ENCODE measurements at regions of chr14 and their contacts with region 1.

Region 1: GRCh38 chr14:54669721-54670561 is 103.0 kb downstream of the SAMD4A start:
- DNase-seq: no peak
- H3K4me3 Mint-ChIP-seq: no peak overlapping the region
- H3K27ac Mint-ChIP-seq: no peak overlapping the region
- H3K4me1 Mint-ChIP-seq: peaks cover 51% of the 10 kb centered on the region
- H3K27me3 Mint-ChIP-seq: peaks cover 21% of the 10 kb centered on the region

Region 2: DNA sequence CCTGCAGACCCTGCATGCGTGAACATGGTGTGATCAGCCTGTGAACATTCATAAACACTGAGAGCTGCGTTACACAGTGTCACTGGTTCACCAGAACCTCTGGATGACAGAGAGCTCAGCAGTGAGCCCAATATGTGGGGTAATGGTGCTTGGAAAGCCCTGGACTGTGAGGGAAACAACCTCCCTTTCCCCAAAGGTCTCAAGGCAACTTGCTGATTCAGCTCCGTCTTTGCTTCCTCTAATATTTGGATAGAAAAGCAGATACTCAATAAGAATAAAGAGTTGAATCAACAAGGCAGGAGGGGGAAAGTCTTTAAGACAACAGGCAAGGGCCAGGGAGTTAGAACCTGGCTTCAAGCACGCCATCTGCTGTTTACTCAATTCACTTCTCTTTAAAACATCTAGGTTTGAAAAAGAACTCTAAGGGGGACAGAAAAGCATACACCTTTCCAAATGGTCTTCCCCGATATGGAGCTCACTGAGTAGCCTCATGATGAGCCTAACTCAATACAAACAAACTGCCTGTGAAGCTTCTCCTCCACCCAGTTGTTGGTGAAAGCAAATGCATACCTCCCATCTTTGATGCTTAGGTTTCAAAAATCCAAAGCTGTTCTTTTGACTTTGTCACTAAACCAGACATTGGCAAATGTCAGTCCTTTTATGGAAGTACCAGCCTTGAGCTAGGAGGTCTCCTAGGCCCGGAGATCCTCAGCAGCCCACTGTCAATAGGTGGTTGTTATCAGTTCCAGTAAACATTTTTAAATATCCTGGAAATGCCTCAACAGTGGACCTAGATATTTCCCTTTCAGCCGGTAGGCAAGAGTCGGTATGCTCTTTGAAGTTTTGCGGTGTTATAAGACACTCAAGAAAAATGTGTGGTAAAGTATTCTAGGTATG is 26.9 kb before region 1 on chr14:
- intact Hi-C with region 1: loop called (anchors 2 kb)
- DNase-seq: no peak
- H3K4me3 Mint-ChIP-seq: no peak overlapping the region
- H3K27ac Mint-ChIP-seq: no peak overlapping the region
- H3K4me1 Mint-ChIP-seq: peaks cover 13% of the 10 kb centered on the region
- H3K27me3 Mint-ChIP-seq: peaks cover 19% of the 10 kb centered on the region

Region 3: GRCh38 chr14:54722781-54723432 is 53.0 kb after region 1 on chr14:
- intact Hi-C with region 1: loop called (anchors 5 kb)
- DNase-seq: no peak
- H3K4me3 Mint-ChIP-seq: no peak overlapping the region
- H3K27ac Mint-ChIP-seq: no peak overlapping the region
- H3K4me1 Mint-ChIP-seq: peaks cover 20% of the 10 kb centered on the region
- H3K27me3 Mint-ChIP-seq: peaks cover 39% of the 10 kb centered on the region

Region 4: GRCh38 chr14:55026793-55027561 is 357.0 kb after region 1 on chr14 and contains the starts of genes SOCS4 and WDHD1:
- intact Hi-C with region 1: no loop called
- DNase-seq: peak; percentile 98
- H3K4me3 Mint-ChIP-seq: peak within 1 kb of the TSS; percentile 94
- H3K27ac Mint-ChIP-seq: peak within 1 kb of the TSS; percentile 90
- H3K4me1 Mint-ChIP-seq: peaks cover 48% of the 10 kb centered on the region
- H3K27me3 Mint-ChIP-seq: no peaks in the 10 kb centered on the region
- total RNA-seq, gene SOCS4: 35.1 and 37.4 TPM in 2 replicates
- total RNA-seq, gene WDHD1: 50.3 and 51.3 TPM in 2 replicates